ENCODE measurements at regions of chrX and their contacts with region 1.

Region 1: DNA sequence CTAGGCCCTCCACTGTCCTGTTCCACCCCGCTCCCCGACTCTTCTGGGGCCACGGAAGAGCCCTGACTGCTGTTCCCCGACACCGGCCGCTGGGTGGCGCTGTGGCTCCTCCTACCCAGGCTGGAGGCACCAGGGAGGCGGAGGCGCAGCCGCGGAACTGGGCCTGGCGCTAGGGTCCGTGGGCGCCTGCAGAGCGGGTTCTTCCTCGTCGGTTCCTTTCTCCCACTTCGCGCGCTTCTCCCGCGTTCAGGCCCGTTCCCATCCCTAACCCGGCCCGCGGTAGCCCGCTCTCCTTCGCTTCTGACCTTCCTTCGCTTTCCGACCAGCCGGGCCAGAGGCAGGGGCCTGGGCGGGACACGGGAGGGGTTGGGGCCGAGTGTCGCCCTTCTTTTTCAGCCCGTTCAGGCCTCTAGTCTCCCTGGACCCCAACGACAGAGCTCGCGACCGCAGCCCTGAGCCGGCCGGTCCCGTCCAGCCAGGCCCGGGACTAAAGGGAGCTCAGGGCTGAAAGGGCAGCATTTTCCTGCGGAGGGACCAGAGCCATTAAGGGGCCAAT is 34.3 kb downstream of the NALF2 start:
- DNase-seq: peak; percentile 77
- CTCF ChIP-seq: peak; percentile 83

Region 2: DNA sequence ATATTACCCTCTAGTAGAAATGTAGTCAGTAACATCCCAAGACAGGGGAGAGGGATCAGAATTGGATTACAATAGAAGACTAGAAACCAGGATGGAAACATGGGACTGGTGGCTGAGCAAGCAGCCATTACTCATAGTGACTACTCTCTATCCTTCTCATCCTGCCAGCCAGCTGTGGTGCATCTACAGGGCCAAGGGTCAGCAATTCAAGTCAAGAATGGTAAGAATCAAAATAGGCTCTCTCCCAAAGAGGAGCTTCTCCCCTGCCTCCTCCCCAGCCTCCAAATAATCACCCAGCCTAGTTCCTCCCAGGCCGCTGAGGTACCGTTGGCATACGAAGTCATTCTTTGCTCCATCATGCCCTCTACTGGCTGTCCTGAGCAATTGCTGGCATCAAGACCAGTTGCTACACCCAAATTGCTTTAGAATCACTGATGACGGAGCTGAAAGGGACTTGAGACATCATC is 491.9 kb after region 1 on chrX:
- in situ Hi-C with region 1: loop called (anchors 25 kb)
- DNase-seq: peak; percentile 65
- CTCF ChIP-seq: peak; percentile 87